AG04450 (cell line): ENCODE measurements at regions of chr6 and their contacts with region 1.

Region 1: DNA sequence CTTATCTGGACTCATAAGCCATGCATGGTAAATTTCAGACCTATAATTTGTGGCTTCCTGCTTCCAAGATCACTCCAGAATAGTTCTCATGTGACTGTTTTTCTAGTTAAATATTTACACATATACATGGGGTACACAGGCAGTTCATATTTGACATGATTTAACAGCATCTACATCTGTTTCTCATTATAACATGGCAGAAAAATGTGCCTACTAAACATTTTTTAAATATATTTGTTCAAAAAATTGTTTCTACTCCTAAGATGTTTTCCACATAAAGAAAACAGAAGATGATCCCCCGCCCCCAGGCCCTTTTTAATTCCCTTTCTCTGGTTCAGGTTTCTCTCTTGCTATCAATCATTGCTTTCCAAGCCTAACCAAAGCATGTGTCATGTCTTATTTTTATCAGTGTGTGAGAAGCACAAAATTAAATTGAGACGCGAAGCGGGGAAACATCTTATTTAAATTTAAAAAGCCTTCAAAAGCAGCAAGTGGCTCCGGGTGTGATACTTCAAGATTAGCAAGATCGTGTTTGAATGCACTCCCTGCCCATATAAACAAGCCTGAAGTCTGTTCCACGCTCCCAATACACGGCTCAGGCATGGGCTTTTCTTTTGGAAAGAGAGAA is 37.3 kb downstream of the IPCEF1 start:
- DNase-seq: peak; percentile 69
- H3K4me3 ChIP-seq: no peak overlapping the region; the same call in 1 of the 2 replicates
- H3K27ac ChIP-seq: peak overlapping the region; percentile 85
- H3K27me3 ChIP-seq: no peaks in the 10 kb centered on the region
- CTCF ChIP-seq: no peak

Region 2: GRCh38 chr6:154030646-154031045 is 288.7 kb before region 1 on chr6:
- CTCF ChIA-PET with region 1: no interaction called
- POLR2A ChIA-PET with region 1: no interaction called
- DNase-seq: no peak
- H3K4me3 ChIP-seq: no peak overlapping the region
- H3K27ac ChIP-seq: no peak overlapping the region
- H3K27me3 ChIP-seq: no peaks in the 10 kb centered on the region
- CTCF ChIP-seq: no peak

Region 3: DNA sequence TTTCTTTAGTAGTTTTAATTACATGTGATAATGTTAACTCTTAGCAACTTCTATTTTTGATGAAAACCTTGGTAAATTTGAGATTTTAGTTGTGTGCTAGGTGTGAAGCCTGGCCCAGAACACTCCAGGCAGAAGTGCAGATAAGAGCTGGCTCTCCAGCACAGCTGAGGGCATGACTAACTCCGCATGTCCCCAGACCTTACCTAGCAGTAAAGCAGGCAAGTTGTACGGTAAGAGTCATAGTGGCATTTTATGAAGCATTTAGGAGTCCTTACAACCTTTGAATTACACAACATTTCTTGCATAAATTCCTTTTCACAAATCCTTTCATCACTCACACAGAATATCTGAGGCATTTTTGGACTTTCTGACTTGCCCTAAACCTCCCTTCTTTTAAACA is 213.1 kb before region 1 on chr6:
- CTCF ChIA-PET with region 1: interaction called, 10 read pairs
- POLR2A ChIA-PET with region 1: no interaction called
- DNase-seq: no peak
- H3K4me3 ChIP-seq: no peak overlapping the region
- H3K27ac ChIP-seq: no peak overlapping the region
- H3K27me3 ChIP-seq: no peaks in the 10 kb centered on the region
- CTCF ChIP-seq: no peak

Region 4: DNA sequence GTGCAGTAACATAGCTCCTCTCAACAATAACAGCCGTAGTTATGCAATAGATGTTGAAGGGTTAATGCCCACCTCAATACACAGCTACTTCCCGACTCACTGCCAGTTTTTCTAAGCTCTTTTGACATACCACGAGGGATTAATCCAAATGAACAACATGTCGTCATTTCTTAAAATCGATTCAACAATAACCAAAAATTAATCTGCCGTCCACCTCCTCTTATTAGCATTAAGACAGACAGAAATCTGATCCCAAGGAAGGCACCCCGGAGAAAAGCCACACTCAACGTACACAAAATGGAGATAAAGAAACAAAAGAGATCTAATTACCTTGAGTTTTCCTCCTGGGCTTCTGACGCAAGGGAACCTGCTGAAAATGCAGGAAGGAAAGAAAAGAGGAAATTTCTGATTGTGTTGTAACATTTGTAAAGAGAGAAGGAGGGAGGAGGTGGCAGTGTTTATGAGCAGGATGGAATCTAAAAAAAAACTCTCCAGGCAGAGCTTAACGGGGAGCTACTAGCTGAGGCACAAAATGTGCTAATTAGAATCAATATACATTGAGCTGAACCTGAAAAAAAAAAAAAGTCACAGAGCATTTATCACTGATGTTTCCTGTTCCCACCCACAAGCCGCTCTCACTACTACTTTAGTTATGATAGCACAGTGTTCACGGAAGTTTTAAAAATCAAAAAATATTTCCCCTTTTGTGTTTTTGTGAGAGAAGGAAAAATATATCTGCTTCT is 72.1 kb before region 1 on chr6:
- CTCF ChIA-PET with region 1: no interaction called
- POLR2A ChIA-PET with region 1: interaction called, 10 read pairs
- DNase-seq: no peak
- H3K4me3 ChIP-seq: no peak overlapping the region
- H3K27ac ChIP-seq: no peak overlapping the region
- H3K27me3 ChIP-seq: no peaks in the 10 kb centered on the region
- CTCF ChIP-seq: no peak